Naive thymus-derived CD4-positive, alpha-beta T cell (primary cell): ENCODE measurements at regions of chr17 and their contacts with region 1.

Region 1: DNA sequence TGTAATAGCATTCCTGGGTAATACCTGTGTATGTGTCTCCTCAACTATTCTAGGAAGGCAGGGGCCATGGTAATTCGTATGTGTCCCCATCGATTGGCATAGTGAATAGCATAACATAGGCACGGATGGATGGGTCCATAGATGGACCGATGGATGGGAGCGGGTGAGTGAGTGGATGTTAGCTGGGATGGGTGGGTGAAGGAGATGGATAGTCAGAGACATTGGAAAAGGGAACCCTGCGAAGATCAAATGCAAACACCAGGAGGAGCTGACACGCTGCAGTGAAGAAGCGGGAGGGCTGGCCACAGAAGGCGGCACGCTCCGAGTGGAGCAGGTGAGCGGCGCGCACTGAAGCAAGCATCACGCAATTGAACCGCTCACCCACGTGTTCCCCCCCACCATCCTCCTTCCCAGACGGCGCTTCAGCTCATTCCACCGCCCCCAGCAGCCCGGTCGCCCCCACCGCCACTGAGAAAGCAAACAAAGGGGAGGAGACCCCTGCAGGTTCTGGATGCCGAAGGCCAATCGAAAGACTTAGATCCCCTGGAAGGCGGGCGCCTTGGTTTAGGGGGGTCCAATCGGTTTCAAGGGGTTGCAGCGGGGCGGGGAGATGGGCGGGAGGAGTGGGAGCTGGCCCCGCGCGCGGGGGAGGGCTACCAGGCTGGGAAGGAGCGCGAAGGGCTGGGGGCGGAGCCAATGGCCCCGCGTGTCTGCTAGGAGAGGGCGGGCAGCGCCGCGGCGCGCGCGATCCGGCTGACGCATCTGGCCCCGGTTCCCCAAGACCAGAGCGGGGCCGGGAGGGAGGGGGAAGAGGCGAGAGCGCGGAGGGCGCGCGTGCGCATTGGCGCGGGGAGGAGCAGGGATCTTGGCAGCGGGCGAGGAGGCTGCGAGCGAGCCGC is at the start of gene ARRB2:
- DNase-seq: peak; percentile 97 to 99 (median 99)
- ATAC-seq: peak; percentile 91
- H3K4me3 ChIP-seq: peak within 1 kb of the TSS; percentile 89
- H3K4me3 Mint-ChIP-seq: peak within 1 kb of the TSS; percentile 89 to 99 (median 97)
- H3K27ac ChIP-seq: peak within 1 kb of the TSS; percentile 84
- H3K27ac Mint-ChIP-seq: peak within 1 kb of the TSS; percentile 69 to 98 (median 92)
- H3K4me1 ChIP-seq: peaks cover 28 to 34% of the 10 kb centered on the region in 2 donors
- H3K4me1 Mint-ChIP-seq: peaks cover 21 to 63% (median 49%) of the 10 kb centered on the region in 7 donors
- H3K27me3 ChIP-seq: no peaks in the 10 kb centered on the region
- H3K27me3 Mint-ChIP-seq: no peaks in the 10 kb centered on the region
- total RNA-seq, gene ARRB2: 270 to 601 (median 377) TPM

Region 2: GRCh38 chr17:4721203-4722135 is 11.4 kb after region 1 on chr17:
- CTCF ChIA-PET with region 1: interaction called, 3 read pairs
- POLR2A ChIA-PET with region 1: interaction called, 26 read pairs
- intact Hi-C with region 1: no loop called
- DNase-seq: no peak
- ATAC-seq: peak; percentile 49
- H3K4me3 ChIP-seq: no peak overlapping the region
- H3K4me3 Mint-ChIP-seq: no peak overlapping the region
- H3K27ac ChIP-seq: no peak overlapping the region
- H3K27ac Mint-ChIP-seq: peak overlapping the region; percentile 4 to 82 (median 25)
- H3K4me1 ChIP-seq: no peaks in the 10 kb centered on the region
- H3K4me1 Mint-ChIP-seq: peaks cover 0 to 33% (median 6%) of the 10 kb centered on the region in 7 donors
- H3K27me3 ChIP-seq: no peaks in the 10 kb centered on the region
- H3K27me3 Mint-ChIP-seq: no peaks in the 10 kb centered on the region

Region 3: GRCh38 chr17:4789901-4790704 is 80.1 kb after region 1 on chr17:
- CTCF ChIA-PET with region 1: interaction called, 16 read pairs
- POLR2A ChIA-PET with region 1: interaction called, 48 read pairs
- intact Hi-C with region 1: loop called (anchors 1 to 2 kb)
- DNase-seq: peak; percentile 66 to 87 (median 78)
- ATAC-seq: peak; percentile 93
- H3K4me3 ChIP-seq: peak overlapping the region; percentile 75
- H3K4me3 Mint-ChIP-seq: peak overlapping the region; percentile 67 to 94 (median 88)
- H3K27ac ChIP-seq: peak overlapping the region; percentile 73
- H3K27ac Mint-ChIP-seq: peak overlapping the region; percentile 1 to 93 (median 89)
- H3K4me1 ChIP-seq: peaks cover 15 to 20% of the 10 kb centered on the region in 2 donors
- H3K4me1 Mint-ChIP-seq: peaks cover 11 to 34% (median 19%) of the 10 kb centered on the region in 7 donors
- H3K27me3 ChIP-seq: peaks cover 0 to 11% of the 10 kb centered on the region in 2 donors
- H3K27me3 Mint-ChIP-seq: peaks cover 23 to 49% (median 31%) of the 10 kb centered on the region in 5 donors

Region 4: DNA sequence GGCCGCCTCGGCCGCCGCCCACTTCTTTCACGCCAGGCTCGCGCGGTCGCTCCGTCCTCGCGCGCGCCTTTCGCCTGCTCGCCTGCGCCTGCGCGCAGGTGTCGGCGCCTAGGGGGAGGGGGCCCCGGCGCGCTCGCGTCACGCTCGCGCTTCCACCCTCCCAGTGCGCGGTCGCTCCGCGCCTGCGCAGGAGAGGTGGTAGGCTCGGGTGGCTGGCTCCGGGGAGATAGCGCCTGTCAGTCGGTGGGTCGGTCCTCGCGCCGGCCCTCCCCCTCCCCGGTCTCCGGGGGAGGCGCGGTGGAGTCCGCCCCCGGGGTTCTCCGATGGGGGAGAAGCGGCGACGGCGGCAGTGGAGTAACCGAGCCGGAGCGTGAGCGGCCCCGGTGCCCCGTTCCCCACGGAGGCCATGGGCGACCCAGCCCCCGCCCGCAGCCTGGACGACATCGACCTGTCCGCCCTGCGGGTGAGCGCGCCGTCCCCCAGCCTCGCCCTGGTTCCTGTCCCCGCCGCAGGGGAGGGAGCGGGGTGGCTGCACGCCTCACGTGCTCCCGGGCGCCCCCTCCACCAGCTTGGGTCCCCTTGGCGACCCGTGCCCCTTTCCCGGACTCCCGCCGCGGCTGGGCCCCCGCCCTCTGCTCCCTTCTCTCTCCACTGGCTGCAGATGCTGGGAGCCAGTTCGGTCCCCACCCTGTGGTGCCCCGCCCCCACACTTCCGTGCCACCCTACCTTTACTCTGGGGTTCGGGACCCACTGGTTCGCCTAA is 123.3 kb after region 1 on chr17 and contains the start of gene MINK1:
- CTCF ChIA-PET with region 1: interaction called, 4 read pairs
- POLR2A ChIA-PET with region 1: interaction called, 4 read pairs
- intact Hi-C with region 1: loop called (anchors 1 kb)
- DNase-seq: peak; percentile 80 to 89 (median 85)
- ATAC-seq: peak; percentile 96
- H3K4me3 ChIP-seq: peak within 1 kb of the TSS; percentile 87
- H3K4me3 Mint-ChIP-seq: peak within 1 kb of the TSS; percentile 89 to 99 (median 96)
- H3K27ac ChIP-seq: peak within 1 kb of the TSS; percentile 85
- H3K27ac Mint-ChIP-seq: peak within 1 kb of the TSS; percentile 82 to 97 (median 92)
- H3K4me1 ChIP-seq: peaks cover 14 to 27% of the 10 kb centered on the region in 2 donors
- H3K4me1 Mint-ChIP-seq: peaks cover 34 to 42% (median 38%) of the 10 kb centered on the region in 7 donors
- H3K27me3 ChIP-seq: no peaks in the 10 kb centered on the region
- H3K27me3 Mint-ChIP-seq: peaks cover 0 to 5% (median 0%) of the 10 kb centered on the region in 5 donors
- total RNA-seq, gene MINK1: 88.8 to 142 (median 125) TPM

Region 5: DNA sequence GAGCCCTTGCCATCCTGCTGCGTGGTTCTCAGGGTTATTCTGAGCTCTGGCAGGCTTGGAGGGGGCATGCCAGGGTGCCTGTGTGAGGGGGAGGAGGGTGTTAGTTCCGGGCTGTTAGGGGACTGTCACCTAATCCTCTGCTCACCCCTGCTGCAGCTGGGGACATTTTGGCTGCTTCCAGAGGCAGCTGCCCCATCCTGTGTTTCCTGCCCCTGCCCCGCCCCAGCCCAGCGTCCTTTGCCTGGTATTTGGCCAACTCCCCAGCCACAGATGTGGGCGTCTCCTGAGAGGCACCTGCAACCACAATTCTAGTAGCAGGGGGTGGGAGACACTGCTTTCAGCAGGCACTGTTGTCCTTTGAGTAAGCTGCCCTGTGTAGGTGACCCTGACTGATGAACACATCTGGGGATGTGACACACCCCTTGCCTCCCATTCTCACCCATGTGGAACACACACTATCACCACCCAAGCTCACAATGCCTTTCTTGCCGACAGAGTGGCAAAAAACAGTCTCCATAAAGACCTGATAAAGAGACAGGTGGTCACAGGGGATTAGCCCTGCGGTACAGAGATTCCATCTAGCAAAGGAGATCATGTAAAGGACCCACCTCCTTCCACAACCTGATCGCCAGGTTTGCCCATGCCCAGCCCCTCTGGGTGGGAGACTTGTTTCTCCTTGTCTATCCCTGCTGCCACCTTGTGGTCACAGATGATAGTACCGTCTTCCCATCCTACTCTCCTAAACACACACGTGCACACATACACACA is 193.2 kb after region 1 on chr17 and contains the start of gene CHRNE:
- CTCF ChIA-PET with region 1: interaction called, 3 read pairs
- POLR2A ChIA-PET with region 1: interaction called, 7 read pairs
- intact Hi-C with region 1: loop called (anchors 1 kb)
- DNase-seq: peak in 8 of 9 donors; percentile 63 to 80 (median 76)
- ATAC-seq: peak; percentile 41
- H3K4me3 ChIP-seq: peak within 1 kb of the TSS; percentile 29
- H3K4me3 Mint-ChIP-seq: peak within 1 kb of the TSS; percentile 37 to 84 (median 72)
- H3K27ac ChIP-seq: no peak within 1 kb of the TSS
- H3K27ac Mint-ChIP-seq: peak within 1 kb of the TSS; percentile 57 to 98 (median 71)
- H3K4me1 ChIP-seq: peaks cover 29 to 40% of the 10 kb centered on the region in 2 donors
- H3K4me1 Mint-ChIP-seq: peaks cover 14 to 46% (median 37%) of the 10 kb centered on the region in 7 donors
- H3K27me3 ChIP-seq: no peaks in the 10 kb centered on the region
- H3K27me3 Mint-ChIP-seq: peaks cover 0 to 20% (median 0%) of the 10 kb centered on the region in 5 donors
- total RNA-seq, gene CHRNE: 0.34 to 6.5 (median 1.0) TPM

Region 6: GRCh38 chr17:4966844-4967538 is 256.9 kb after region 1 on chr17:
- CTCF ChIA-PET with region 1: no interaction called
- POLR2A ChIA-PET with region 1: interaction called, 3 read pairs
- intact Hi-C with region 1: loop called (anchors 1 kb)
- DNase-seq: peak in 8 of 9 donors; percentile 25 to 97 (median 95)
- ATAC-seq: peak; percentile 89
- H3K4me3 ChIP-seq: peak overlapping the region; percentile 93
- H3K4me3 Mint-ChIP-seq: no peak overlapping the region
- H3K27ac ChIP-seq: peak overlapping the region; percentile 79
- H3K27ac Mint-ChIP-seq: peak overlapping the region in 3 of 9 donors; percentile 72 to 90 (median 81)
- H3K4me1 ChIP-seq: peaks cover 17 to 22% of the 10 kb centered on the region in 2 donors
- H3K4me1 Mint-ChIP-seq: peaks cover 15 to 32% (median 24%) of the 10 kb centered on the region in 7 donors
- H3K27me3 ChIP-seq: no peaks in the 10 kb centered on the region
- H3K27me3 Mint-ChIP-seq: no peaks in the 10 kb centered on the region